T-cell (primary cell): ENCODE measurements at regions of chr3 and their contacts with region 1.

Region 1: DNA sequence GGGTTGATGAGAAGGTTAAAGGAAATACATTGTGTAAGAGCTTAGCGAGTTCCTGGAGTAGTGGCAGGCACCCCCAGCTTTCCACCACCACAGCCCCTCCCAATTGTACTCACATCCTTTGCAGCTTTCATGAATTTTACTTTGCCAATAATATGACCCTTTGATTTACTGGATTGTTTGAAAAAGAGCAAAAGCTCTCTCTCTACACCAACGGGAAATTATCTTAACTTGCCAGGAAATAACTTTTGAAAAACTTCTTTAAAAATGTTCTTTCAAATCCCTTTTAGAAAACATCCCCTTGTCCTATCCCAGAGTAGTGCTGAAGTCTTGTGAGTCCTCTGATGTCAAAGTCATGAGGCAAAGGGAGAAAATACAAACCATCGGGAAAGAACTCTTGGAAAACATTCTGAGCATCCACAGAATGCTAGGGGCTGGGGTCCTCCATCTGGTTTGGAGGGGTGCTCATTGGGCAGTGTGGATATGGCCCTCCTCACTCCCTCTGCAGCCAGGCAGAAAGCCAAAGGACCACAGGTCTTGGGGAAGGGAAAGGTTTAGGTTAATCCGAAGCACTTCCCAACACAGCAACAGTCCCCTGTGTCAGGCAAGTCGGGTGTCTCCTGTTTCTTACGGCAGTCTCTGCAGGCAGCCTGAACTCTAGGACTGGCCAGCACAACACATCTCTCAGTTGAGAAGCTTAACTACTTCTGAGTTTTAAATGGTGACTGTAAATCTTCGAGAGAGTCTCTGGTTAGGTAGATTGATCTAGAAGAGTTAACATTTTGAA is 36.5 kb downstream of the BOC start:
- DNase-seq: no peak
- ATAC-seq: no peak
- H3K4me3 ChIP-seq: no peak overlapping the region
- H3K4me3 Mint-ChIP-seq: no peak overlapping the region
- H3K27ac ChIP-seq: no peak overlapping the region
- H3K27ac Mint-ChIP-seq: no peak overlapping the region
- H3K4me1 ChIP-seq: peaks cover 0 to 2% of the 10 kb centered on the region in 2 experiments
- H3K4me1 Mint-ChIP-seq: no peaks in the 10 kb centered on the region
- H3K27me3 ChIP-seq: peaks cover 0 to 12% of the 10 kb centered on the region in 2 experiments
- H3K27me3 Mint-ChIP-seq: peaks cover 11 to 13% of the 10 kb centered on the region in 2 donors

Region 2: DNA sequence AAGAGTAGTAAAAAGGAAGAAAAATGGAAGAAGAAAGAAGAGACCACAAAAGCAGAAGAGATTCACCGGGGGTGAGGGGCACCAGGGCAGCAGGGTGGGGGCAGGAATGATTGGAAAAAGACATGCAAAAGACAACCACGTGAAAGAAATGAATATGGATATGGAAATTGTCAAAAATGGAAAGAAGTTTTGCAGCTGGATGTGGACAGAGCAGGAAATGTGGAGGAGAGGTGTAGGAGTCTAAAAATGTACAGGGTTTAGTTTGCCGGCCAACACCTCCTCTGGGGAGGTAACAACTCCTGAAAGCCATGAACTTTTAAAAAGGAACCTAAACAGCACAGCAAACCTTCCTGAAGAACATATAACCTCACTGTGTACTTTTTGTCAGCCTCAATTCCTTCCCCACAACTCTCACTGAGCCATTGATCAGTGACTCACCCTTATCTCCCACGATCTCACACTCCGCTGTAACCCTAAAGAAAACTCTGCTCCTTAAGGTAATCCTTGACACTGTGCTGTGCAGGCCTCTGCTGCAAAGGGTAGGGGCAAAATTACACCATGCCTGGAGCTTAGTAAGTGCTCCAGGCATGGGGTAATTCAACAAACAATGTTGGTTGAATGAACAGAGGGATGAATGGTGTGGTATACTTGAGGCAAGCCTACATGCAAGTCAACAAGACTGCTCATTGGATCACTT is 136.7 kb before region 1 on chr3:
- CTCF ChIA-PET with region 1: no interaction called
- POLR2A ChIA-PET with region 1: no interaction called
- DNase-seq: peak in 1 of 35 experiments; percentile 10
- ATAC-seq: peak; percentile 28 to 85 (median 46)
- H3K4me3 ChIP-seq: no peak overlapping the region
- H3K4me3 Mint-ChIP-seq: no peak overlapping the region
- H3K27ac ChIP-seq: no peak overlapping the region
- H3K27ac Mint-ChIP-seq: no peak overlapping the region
- H3K4me1 ChIP-seq: peaks cover 0 to 5% of the 10 kb centered on the region in 2 experiments
- H3K4me1 Mint-ChIP-seq: peaks cover 0 to 12% (median 10%) of the 10 kb centered on the region in 3 donors
- H3K27me3 ChIP-seq: no peaks in the 10 kb centered on the region
- H3K27me3 Mint-ChIP-seq: no peaks in the 10 kb centered on the region

Region 3: GRCh38 chr3:113329757-113330156 is 81.9 kb after region 1 on chr3:
- CTCF ChIA-PET with region 1: no interaction called
- POLR2A ChIA-PET with region 1: no interaction called
- DNase-seq: no peak
- ATAC-seq: no peak
- H3K4me3 ChIP-seq: no peak overlapping the region
- H3K4me3 Mint-ChIP-seq: no peak overlapping the region
- H3K27ac ChIP-seq: no peak overlapping the region
- H3K27ac Mint-ChIP-seq: no peak overlapping the region
- H3K4me1 ChIP-seq: no peaks in the 10 kb centered on the region
- H3K4me1 Mint-ChIP-seq: no peaks in the 10 kb centered on the region
- H3K27me3 ChIP-seq: no peaks in the 10 kb centered on the region
- H3K27me3 Mint-ChIP-seq: no peaks in the 10 kb centered on the region

Region 4: GRCh38 chr3:113736548-113737089 is 488.8 kb after region 1 on chr3:
- CTCF ChIA-PET with region 1: interaction called in 1 of 2 experiments, 12 read pairs
- POLR2A ChIA-PET with region 1: no interaction called
- DNase-seq: peak in 10 of 35 experiments; percentile 5 to 84 (median 24)
- ATAC-seq: peak; percentile 73 to 85 (median 76)
- H3K4me3 ChIP-seq: no peak overlapping the region
- H3K4me3 Mint-ChIP-seq: no peak overlapping the region
- H3K27ac ChIP-seq: peak overlapping the region; percentile 16
- H3K27ac Mint-ChIP-seq: peak overlapping the region; percentile 70 to 77
- H3K4me1 ChIP-seq: peaks cover 5 to 7% of the 10 kb centered on the region in 2 experiments
- H3K4me1 Mint-ChIP-seq: peaks cover 44 to 73% (median 73%) of the 10 kb centered on the region in 3 donors
- H3K27me3 ChIP-seq: no peaks in the 10 kb centered on the region
- H3K27me3 Mint-ChIP-seq: no peaks in the 10 kb centered on the region